ENCODE measurements at regions of chr15 and their contacts with region 1.

Region 1: DNA sequence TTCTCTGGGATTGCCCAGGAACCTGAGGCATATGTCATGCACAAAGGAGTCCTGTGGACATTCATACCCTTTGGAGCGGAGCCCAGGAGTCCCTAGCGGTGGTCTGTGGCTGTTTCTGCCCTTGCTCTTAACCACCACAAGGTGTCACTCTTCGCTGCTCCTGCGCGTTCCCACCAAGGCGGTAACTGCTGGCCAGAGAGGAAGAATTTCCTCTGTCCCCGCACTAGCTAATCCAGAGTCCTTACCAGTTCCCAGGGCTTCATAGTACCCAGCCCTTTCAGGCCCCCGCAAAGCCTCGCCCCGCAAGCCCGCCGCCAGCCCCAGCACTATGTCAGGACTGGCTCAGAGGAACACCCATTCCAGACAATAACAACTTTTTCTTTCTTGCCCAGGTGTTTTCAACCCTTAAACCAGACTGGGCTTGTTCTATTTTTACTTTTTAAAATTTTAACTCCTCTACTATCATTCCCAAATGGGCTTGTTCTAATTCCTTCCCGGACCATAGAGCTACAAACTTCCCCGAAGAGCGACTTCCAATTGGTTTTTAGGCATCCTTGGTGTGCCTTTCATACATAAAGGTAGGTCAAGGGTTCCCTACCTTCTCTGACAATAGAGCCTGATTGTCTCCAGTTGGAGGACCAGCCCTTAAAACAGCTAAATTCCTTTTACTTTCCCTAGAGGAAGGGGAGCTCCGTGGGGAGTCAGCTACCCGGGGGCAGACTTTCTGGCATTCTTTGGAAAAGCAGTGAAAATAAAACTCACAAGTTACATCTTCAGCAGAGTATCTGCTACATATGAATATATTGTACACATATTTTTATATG is 31.8 kb upstream of the ZNF774 start:
- DNase-seq: peak; percentile 88
- H3K4me3 ChIP-seq: peak overlapping the region; percentile 14 to 24 (median 15)
- H3K27ac ChIP-seq: peak overlapping the region; percentile 49
- H3K4me1 ChIP-seq: peaks cover 18% of the 10 kb centered on the region
- H3K27me3 ChIP-seq: no peaks in the 10 kb centered on the region
- CTCF ChIP-seq: peak; percentile 99 to 100

Region 2: DNA sequence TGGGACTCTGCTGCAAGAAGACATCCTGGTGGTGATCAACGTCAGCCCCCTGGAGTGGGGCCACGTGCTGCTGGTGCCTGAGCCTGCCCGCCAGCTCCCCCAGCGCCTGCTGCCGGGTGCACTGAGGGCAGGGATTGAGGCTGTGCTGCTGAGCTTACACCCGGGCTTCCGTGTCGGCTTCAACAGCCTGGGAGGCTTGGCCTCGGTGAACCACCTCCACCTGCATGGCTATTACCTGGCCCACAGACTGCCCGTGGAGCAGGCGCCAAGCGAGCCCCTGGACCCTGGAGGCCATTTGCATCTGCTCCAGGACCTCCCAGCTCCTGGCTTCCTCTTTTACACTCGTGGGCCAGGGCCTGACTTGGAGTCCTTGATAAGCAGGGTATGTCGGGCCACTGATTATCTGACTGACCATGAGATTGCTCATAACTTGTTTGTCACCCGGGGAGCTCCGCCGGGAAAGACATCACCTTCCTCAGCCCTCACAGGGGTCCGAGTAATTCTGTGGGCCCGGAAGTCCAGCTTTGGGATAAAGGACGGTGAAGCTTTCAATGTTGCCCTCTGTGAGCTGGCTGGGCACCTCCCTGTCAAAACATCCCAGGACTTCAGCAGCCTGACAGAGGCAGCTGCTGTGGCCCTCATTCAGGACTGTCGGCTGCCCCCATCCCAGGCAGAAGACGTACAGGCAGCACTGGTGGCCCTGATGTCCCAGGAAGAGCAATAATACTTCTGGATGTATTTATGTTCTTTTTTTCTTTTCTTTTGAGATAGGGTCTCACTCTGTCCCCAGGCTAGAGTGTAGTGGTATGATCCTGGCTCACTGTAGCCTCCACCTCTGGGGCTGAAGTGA is 78.7 kb before region 1 on chr15:
- CTCF ChIA-PET with region 1: no interaction called
- dilution Hi-C with region 1: no loop called
- in situ Hi-C with region 1: no loop called
- intact Hi-C with region 1: no loop called
- DNase-seq: no peak
- H3K4me3 ChIP-seq: no peak overlapping the region
- H3K27ac ChIP-seq: no peak overlapping the region
- H3K4me1 ChIP-seq: no peaks in the 10 kb centered on the region
- H3K27me3 ChIP-seq: no peaks in the 10 kb centered on the region
- CTCF ChIP-seq: no peak

Region 3: DNA sequence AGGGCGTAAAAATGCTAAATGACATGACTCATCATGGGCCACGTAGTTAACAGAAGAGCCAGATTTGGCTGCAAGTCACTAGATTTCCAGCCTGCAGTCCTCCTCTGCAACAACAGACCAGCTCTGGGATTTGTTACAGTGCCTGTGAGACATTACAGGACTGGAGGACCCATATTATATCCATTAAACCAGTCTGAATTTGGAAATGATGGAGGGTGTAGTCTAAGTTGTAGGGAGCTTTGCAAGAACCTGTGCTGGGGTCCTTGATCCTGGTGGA is 42.6 kb after region 1 on chr15:
- CTCF ChIA-PET with region 1: no interaction called
- dilution Hi-C with region 1: no loop called
- in situ Hi-C with region 1: no loop called
- intact Hi-C with region 1: loop called (anchors 1 kb)
- DNase-seq: peak; percentile 66
- H3K4me3 ChIP-seq: no peak overlapping the region
- H3K27ac ChIP-seq: peak overlapping the region; percentile 90
- H3K4me1 ChIP-seq: peaks cover 44% of the 10 kb centered on the region
- H3K27me3 ChIP-seq: no peaks in the 10 kb centered on the region
- CTCF ChIP-seq: no peak

Region 4: DNA sequence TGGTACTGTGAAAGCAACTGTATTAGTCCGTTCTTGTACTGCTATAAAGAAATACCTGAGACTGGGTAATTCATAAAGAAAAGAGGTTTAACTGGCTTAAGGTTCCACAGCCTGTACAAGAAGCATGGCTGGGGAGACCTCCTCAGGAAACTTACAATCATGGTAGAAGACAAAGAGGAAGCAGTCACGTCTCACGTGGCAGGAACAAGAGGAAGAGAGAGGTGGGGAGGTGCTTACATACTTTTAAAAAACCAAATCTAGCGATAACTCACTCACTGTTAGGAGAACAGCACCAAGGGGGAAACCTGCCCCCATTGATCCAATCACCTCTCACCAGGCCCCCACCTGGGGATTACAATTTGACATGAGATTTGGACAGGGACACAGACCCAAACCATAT is 116.7 kb after region 1 on chr15:
- CTCF ChIA-PET with region 1: no interaction called
- dilution Hi-C with region 1: no loop called
- in situ Hi-C with region 1: no loop called
- intact Hi-C with region 1: loop called (anchors 2 kb)
- DNase-seq: no peak
- H3K4me3 ChIP-seq: no peak overlapping the region
- H3K27ac ChIP-seq: no peak overlapping the region
- H3K4me1 ChIP-seq: peaks cover 11% of the 10 kb centered on the region
- H3K27me3 ChIP-seq: no peaks in the 10 kb centered on the region
- CTCF ChIP-seq: no peak

Region 5: GRCh38 chr15:90598031-90598577 is 277.8 kb after region 1 on chr15:
- CTCF ChIA-PET with region 1: no interaction called
- dilution Hi-C with region 1: no loop called
- in situ Hi-C with region 1: no loop called
- intact Hi-C with region 1: loop called (anchors 5 kb)
- DNase-seq: no peak
- H3K4me3 ChIP-seq: no peak overlapping the region
- H3K27ac ChIP-seq: no peak overlapping the region
- H3K4me1 ChIP-seq: no peaks in the 10 kb centered on the region
- H3K27me3 ChIP-seq: no peaks in the 10 kb centered on the region
- CTCF ChIP-seq: no peak

Region 6: GRCh38 chr15:90886041-90886614 is 565.9 kb after region 1 on chr15:
- CTCF ChIA-PET with region 1: no interaction called
- dilution Hi-C with region 1: no loop called
- in situ Hi-C with region 1: no loop called
- intact Hi-C with region 1: loop called (anchors 1 kb)
- DNase-seq: no peak
- H3K4me3 ChIP-seq: no peak overlapping the region
- H3K27ac ChIP-seq: no peak overlapping the region
- H3K4me1 ChIP-seq: no peaks in the 10 kb centered on the region
- H3K27me3 ChIP-seq: no peaks in the 10 kb centered on the region
- CTCF ChIP-seq: peak; percentile 93 to 99